Activated CD8-positive, alpha-beta T cell treated with anti-CD3 and anti-CD28 coated beads for 36 hours (primary cell): ENCODE measurements at regions of chr10 and their contacts with region 1.

Region 1: DNA sequence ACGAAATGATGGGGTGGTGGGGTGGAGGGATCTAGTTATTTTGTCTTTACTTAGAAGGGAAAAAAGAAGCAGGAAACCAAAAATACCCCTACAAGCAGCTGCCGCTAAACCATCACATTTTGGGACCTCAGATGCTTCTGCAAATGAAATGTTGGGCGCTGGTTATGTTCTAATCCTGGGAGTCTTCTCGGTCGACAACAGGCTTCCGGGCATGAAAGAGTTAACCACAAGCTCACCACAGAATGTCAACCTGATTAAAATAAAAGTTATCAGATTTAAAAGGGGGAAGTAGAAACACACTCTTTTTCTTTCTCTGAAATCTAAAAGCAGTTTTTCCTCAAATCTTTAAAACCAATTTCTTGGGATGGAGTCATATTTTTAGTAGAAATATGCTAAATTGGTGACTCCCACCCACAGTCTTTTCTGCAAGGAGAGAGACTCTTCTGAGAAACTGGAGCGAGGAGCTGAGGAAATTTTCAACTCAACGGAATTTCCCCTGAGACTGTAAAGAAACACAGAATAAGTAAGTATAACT is 16.8 kb downstream of the IL2RA start:
- DNase-seq: peak; percentile 79
- ATAC-seq: peak; percentile 40
- H3K4me3 Mint-ChIP-seq: peak overlapping the region; percentile 65
- H3K27ac Mint-ChIP-seq: peak overlapping the region; percentile 97
- H3K4me1 Mint-ChIP-seq: peaks cover 91% of the 10 kb centered on the region
- H3K27me3 Mint-ChIP-seq: no peaks in the 10 kb centered on the region
- CTCF ChIP-seq: no peak

Region 2: GRCh38 chr10:5977471-5978229 is 67.7 kb before region 1 on chr10 and contains the start of gene IL15RA:
- CTCF ChIA-PET with region 1: interaction called, 3 read pairs
- POLR2A ChIA-PET with region 1: interaction called, 21 read pairs
- intact Hi-C with region 1: loop called (anchors 5 kb)
- DNase-seq: peak; percentile 94
- ATAC-seq: peak; percentile 73
- H3K4me3 Mint-ChIP-seq: peak within 1 kb of the TSS; percentile 95
- H3K27ac Mint-ChIP-seq: peak within 1 kb of the TSS; percentile 97
- H3K4me1 Mint-ChIP-seq: peaks cover 30% of the 10 kb centered on the region
- H3K27me3 Mint-ChIP-seq: peaks cover 7% of the 10 kb centered on the region
- CTCF ChIP-seq: peak; percentile 15
- total RNA-seq, gene IL15RA: 23.5 to 25.1 TPM

Region 3: DNA sequence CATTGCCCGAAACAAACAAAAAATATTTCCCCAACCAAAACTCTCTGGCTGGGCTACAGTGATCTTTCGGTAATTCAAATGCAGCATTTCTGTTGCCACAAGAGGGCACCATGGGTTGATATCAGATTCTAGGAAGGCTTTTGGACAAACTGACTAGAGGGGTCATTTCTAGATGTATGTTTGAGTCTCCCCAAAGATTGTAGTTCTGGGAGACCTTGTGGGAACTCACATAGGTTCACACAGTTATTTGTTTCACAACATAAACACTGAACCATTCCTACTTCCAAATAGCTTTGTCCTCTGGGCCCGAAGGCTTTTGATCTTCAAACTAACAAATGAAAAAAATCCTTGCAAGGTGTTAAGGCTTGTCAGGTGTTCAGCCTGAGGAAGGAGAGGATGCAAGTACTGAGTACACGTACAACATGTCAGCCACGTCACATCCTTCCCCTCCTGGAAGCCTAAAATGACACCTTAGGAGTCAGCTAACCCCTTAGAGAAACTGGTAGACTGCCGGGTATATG is 31.1 kb before region 1 on chr10:
- CTCF ChIA-PET with region 1: interaction called, 9 read pairs
- POLR2A ChIA-PET with region 1: interaction called, 20 read pairs
- intact Hi-C with region 1: loop called (anchors 2 kb)
- DNase-seq: peak; percentile 83
- ATAC-seq: peak; percentile 76
- H3K4me3 Mint-ChIP-seq: no peak overlapping the region
- H3K27ac Mint-ChIP-seq: peak overlapping the region; percentile 89
- H3K4me1 Mint-ChIP-seq: peaks cover 69% of the 10 kb centered on the region
- H3K27me3 Mint-ChIP-seq: no peaks in the 10 kb centered on the region
- CTCF ChIP-seq: peak; percentile 70

Region 4: GRCh38 chr10:6033954-6034353 is 11.4 kb before region 1 on chr10:
- CTCF ChIA-PET with region 1: interaction called, 4 read pairs
- POLR2A ChIA-PET with region 1: interaction called, 17 read pairs
- intact Hi-C with region 1: no loop called
- DNase-seq: peak; percentile 3
- ATAC-seq: no peak
- H3K4me3 Mint-ChIP-seq: no peak overlapping the region
- H3K27ac Mint-ChIP-seq: peak overlapping the region; percentile 75
- H3K4me1 Mint-ChIP-seq: peaks cover 70% of the 10 kb centered on the region
- H3K27me3 Mint-ChIP-seq: no peaks in the 10 kb centered on the region
- CTCF ChIP-seq: no peak

Region 5: DNA sequence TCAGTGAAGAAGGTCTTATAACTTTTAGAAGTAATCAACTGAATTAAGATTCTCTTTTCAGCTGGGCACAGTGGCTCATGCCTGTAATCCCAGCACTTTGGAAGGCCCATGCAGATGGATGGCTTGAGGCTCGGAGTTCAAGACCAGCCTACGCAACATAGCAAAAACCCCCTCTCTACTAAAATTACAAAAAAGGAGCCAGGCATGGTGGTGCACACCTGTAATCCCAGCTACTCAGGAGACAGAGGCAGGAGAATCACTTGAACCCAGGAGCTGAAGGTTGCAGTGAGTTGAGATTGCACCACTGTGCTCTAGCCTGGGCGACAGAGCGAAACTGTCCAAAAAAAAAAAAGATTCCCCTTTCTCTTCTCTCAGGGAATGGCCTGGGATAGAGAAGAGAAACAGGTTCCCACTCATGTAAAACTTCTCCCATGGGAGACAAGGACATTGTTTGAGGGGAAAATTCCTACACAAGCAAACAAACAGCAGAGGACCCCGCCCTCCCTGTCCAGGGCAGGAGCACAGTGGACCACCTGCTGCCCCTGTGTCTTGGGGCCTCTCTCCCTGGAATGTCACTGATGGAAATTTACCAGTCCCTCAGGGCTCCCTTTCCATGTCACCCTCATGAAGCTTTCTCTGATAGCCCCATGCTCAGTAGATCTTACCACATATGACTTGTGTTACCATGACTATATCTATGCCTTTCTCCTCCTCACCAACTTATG is 11.2 kb after region 1 on chr10:
- CTCF ChIA-PET with region 1: no interaction called
- POLR2A ChIA-PET with region 1: interaction called, 846 read pairs
- intact Hi-C with region 1: no loop called
- DNase-seq: no peak
- ATAC-seq: no peak
- H3K4me3 Mint-ChIP-seq: peak overlapping the region; percentile 94
- H3K27ac Mint-ChIP-seq: peak overlapping the region; percentile 99
- H3K4me1 Mint-ChIP-seq: peaks cover 60% of the 10 kb centered on the region
- H3K27me3 Mint-ChIP-seq: no peaks in the 10 kb centered on the region
- CTCF ChIP-seq: no peak

Region 6: DNA sequence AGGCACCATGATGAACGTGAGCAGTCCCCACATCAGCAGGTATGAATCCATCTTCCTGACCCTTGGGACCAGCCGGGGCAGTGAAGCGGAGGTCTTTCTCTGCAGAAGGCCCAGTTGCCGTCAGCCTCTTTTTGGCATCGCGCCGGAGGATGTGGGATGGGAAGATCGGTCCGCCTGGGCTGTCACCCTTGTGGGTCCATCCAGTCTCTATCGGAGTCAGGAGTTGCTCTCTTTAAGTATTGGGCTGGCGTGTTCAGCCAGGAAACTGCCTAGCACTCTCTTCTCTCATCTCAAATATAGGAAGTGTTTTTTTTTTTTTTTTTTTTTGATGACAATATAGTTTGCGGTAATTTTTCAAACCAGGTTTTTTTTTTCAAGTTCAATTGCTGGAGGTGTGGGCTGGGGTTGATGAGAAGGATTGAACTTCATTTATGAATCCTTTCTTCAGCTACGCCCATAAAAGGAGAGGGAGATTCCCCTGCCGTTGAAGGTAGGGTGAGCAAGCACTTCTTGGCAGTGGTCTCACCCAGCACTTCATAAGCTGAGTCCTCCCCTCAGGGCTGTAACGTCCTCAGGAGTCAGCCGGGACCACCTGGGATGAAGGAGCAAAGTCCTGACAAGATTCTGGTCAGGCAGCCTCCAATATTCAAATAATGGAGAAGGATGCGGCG is 16.9 kb after region 1 on chr10 and contains the start of gene IL2RA:
- CTCF ChIA-PET with region 1: interaction called, 3 read pairs
- POLR2A ChIA-PET with region 1: interaction called, 846 read pairs
- intact Hi-C with region 1: no loop called
- DNase-seq: peak; percentile 85
- ATAC-seq: peak; percentile 75
- H3K4me3 Mint-ChIP-seq: peak within 1 kb of the TSS; percentile 94
- H3K27ac Mint-ChIP-seq: peak within 1 kb of the TSS; percentile 99
- H3K4me1 Mint-ChIP-seq: peaks cover 55% of the 10 kb centered on the region
- H3K27me3 Mint-ChIP-seq: no peaks in the 10 kb centered on the region
- CTCF ChIP-seq: no peak
- total RNA-seq, gene IL2RA: 868 to 874 TPM